K562 (cell line): ENCODE measurements at regions of chr6 and their contacts with region 1.

Region 1: DNA sequence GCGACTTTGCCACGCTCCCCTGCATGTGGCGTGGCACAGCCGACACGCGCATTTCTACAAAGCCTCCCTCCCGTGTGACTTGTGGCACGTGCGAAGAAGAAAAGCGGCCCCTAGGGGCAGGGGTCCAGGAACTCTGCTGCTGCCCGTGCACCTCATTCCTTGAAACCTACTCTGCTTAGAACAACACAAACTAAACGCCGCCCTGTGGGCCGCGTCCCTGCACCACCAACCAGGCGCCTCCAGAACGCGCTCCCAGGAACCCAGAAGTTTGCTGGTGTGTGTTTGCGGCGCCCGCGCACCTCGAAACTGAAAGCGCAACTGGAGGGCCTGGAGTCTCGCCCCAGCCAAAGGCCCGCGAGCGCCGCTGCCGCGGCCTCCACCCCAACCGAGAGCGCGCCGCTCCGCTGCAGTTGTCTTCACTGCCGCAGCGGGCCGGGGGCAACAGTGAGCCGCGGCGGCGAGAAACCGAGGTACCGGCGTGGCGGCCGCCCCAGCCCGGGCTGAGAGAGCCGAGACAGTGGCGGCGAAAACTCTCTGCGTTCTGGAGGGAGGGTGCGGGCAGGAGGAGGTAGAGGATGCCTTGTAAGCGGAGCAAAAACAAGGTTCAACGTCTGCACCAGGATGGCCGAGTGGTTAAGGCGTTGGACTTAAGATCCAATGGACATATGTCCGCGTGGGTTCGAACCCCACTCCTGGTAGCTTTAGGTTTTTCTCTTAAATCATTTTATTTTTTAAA is 65.8 kb downstream of the STX11 start:
- DNase-seq: peak; percentile 89 to 96 (median 92)
- ATAC-seq: peak; percentile 94
- H3K4me3 ChIP-seq: peak overlapping the region; percentile 75
- H3K27ac ChIP-seq: peak overlapping the region; percentile 90
- H3K4me1 ChIP-seq: peaks cover 14% of the 10 kb centered on the region in 2 experiments
- H3K27me3 ChIP-seq: no peaks in the 10 kb centered on the region
- CTCF ChIP-seq: peak; percentile 75 to 90 (median 76)
- EP300 ChIP-seq: peak; percentile 78
- POLR2A ChIP-seq: peak; percentile 67
- RAD21 ChIP-seq: peak; percentile 25 to 56; a peak in 3 of 4 replicates

Region 2: DNA sequence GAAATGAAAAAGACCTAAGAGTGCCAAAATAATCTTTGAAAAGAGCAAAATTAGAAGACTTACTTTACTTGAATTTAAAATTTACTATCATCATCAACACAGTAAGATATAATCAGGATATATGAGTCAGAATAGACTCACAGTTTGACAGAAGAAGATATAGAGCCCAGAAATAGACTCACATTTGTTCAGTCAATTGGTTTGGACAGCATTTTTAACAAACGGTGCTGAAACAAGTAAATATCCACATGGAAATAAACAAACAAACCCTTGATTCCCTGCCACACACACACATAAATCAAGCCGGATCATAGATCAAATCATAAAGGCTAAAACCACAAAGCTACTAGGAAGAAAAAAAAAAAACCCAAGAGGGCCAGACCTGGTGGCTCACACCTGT is 1623.2 kb before region 1 on chr6:
- CTCF ChIA-PET with region 1: no interaction called
- POLR2A ChIA-PET with region 1: no interaction called
- in situ Hi-C with region 1: no loop called
- intact Hi-C with region 1: no loop called
- DNase-seq: no peak
- ATAC-seq: no peak
- H3K4me3 ChIP-seq: no peak overlapping the region
- H3K27ac ChIP-seq: no peak overlapping the region
- H3K4me1 ChIP-seq: no peaks in the 10 kb centered on the region
- H3K27me3 ChIP-seq: no peaks in the 10 kb centered on the region
- CTCF ChIP-seq: no peak
- EP300 ChIP-seq: no peak
- POLR2A ChIP-seq: no peak
- RAD21 ChIP-seq: no peak

Region 3: DNA sequence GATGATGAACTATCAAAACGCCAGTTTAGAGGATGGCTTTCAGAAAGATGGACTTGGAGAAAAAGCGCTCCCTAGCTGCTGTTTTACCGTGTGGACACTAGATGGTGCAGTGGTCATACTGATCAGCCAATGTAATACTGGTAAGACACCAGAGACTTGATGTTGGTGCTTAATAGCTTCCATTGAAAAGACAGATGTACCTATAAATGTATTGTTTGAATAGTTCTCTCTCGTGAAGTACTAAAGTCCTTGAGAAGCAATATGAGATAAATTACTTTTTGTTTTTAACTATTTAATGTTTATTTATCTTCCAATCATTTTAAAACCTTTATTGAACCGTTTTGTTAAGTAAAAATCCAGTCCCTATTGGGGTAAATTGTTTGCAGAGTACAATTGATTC is 640.7 kb before region 1 on chr6:
- CTCF ChIA-PET with region 1: no interaction called
- POLR2A ChIA-PET with region 1: no interaction called
- in situ Hi-C with region 1: loop called (anchors 10 kb)
- intact Hi-C with region 1: loop called (anchors 5 kb)
- DNase-seq: peak; percentile 79 to 85 (median 84)
- ATAC-seq: peak; percentile 95
- H3K4me3 ChIP-seq: no peak overlapping the region
- H3K27ac ChIP-seq: no peak overlapping the region
- H3K4me1 ChIP-seq: no peaks in the 10 kb centered on the region
- H3K27me3 ChIP-seq: peaks cover 0 to 3% of the 10 kb centered on the region in 2 experiments; a peak in 1 of 5 replicates
- CTCF ChIP-seq: peak; percentile 86 to 97 (median 94)
- EP300 ChIP-seq: no peak
- POLR2A ChIP-seq: no peak
- RAD21 ChIP-seq: peak; percentile 99

Region 4: DNA sequence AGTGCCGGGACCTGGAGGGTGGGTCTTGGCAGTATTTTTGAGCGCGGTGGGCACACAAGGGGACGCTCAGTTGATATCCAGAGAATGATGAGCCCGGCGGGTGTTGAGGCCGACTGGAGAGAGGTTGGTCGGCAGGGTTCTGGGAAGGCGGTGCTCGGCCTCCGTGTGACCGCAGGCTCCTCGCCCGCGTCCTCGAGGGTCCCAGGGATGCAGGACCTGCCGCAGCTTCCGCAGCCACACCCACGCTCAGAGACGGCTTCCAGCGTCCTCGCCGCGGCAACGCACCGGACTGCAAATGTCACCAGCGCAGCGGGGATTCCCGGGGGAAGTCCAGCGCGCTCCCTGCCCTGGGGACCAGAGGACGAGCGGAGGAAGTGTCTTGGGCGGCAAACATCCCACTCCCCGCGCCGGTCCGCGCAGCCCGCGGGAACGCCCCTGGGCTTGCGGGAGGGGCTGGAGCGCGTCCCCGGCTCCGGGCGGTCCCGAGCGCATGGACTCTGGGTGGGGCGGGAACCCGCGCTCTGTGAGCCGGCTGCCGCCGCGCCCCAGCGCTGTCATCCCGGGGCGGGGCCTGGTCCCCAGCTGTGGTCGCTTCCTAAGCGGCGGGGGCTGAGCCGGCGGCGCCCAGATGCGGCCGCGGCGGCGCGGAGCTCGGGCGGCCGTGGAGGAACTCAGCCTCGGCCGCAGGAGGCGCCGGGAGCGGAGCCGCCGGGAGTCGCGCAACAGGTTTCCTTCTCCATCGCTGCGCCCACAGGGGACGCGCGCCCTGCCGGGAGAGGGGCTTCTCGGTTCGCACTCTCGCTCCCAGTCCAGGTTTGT is 66.0 kb before region 1 on chr6 and contains the start of gene STX11:
- CTCF ChIA-PET with region 1: no interaction called
- POLR2A ChIA-PET with region 1: no interaction called
- in situ Hi-C with region 1: no loop called
- intact Hi-C with region 1: loop called (anchors 5 kb)
- DNase-seq: peak; percentile 82 to 89 (median 84)
- ATAC-seq: peak; percentile 98
- H3K4me3 ChIP-seq: peak within 1 kb of the TSS; percentile 51
- H3K27ac ChIP-seq: no peak within 1 kb of the TSS
- H3K4me1 ChIP-seq: peaks cover 7 to 16% of the 10 kb centered on the region in 2 experiments; a peak in 4 of 5 replicates
- H3K27me3 ChIP-seq: peaks cover 17 to 29% of the 10 kb centered on the region in 2 experiments
- CTCF ChIP-seq: peak in 1 of 3 experiments; percentile 16; a peak in 1 of 6 replicates
- EP300 ChIP-seq: no peak
- POLR2A ChIP-seq: no peak
- RAD21 ChIP-seq: no peak
- polyA plus RNA-seq, gene STX11: 0.06 to 0.07 TPM

Region 5: DNA sequence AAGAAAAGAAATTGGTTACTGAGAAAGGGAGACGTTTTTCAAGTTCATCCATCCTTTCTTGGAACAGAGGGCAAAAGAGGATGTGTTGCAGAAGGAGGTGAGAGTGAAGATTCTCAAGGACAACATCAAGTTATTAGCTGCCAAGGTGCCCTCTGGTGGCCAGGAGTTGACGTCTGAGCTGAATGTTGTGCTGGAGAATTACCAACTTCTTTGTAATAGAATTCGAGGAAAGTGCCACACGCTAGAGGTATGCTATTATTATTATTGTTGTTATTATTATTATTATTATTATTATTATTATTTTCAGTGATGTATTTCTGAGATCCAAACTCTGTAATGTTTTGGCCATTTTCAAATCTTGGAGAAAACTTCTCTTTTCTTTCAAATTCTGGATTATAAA is 266.0 kb after region 1 on chr6:
- CTCF ChIA-PET with region 1: no interaction called
- POLR2A ChIA-PET with region 1: no interaction called
- in situ Hi-C with region 1: no loop called
- intact Hi-C with region 1: loop called (anchors 5 kb)
- DNase-seq: peak; percentile 25 to 78 (median 40)
- ATAC-seq: peak; percentile 85
- H3K4me3 ChIP-seq: no peak overlapping the region
- H3K27ac ChIP-seq: no peak overlapping the region
- H3K4me1 ChIP-seq: no peaks in the 10 kb centered on the region
- H3K27me3 ChIP-seq: no peaks in the 10 kb centered on the region
- CTCF ChIP-seq: peak; percentile 61 to 73 (median 68)
- EP300 ChIP-seq: no peak
- POLR2A ChIP-seq: no peak
- RAD21 ChIP-seq: peak; percentile 78 to 80